CD8-positive, alpha-beta T cell (primary cell): ENCODE measurements at regions of chr19 and their contacts with region 1.

Region 1: GRCh38 chr19:48637170-48637947 is at the start of gene DBP:
- DNase-seq: peak; percentile 99 to 100 (median 100)
- ATAC-seq: peak; percentile 70
- H3K4me3 ChIP-seq: peak within 1 kb of the TSS; percentile 76 to 97
- H3K4me3 Mint-ChIP-seq: peak within 1 kb of the TSS; percentile 98
- H3K27ac ChIP-seq: peak within 1 kb of the TSS; percentile 93 to 95
- H3K27ac Mint-ChIP-seq: peak within 1 kb of the TSS; percentile 98
- H3K4me1 ChIP-seq: peaks cover 43% of the 10 kb centered on the region
- H3K4me1 Mint-ChIP-seq: peaks cover 43% of the 10 kb centered on the region
- H3K27me3 ChIP-seq: no peaks in the 10 kb centered on the region
- H3K27me3 Mint-ChIP-seq: no peaks in the 10 kb centered on the region
- CTCF ChIP-seq: no peak
- total RNA-seq, gene DBP: 24.8 to 25.6 TPM

Region 2: DNA sequence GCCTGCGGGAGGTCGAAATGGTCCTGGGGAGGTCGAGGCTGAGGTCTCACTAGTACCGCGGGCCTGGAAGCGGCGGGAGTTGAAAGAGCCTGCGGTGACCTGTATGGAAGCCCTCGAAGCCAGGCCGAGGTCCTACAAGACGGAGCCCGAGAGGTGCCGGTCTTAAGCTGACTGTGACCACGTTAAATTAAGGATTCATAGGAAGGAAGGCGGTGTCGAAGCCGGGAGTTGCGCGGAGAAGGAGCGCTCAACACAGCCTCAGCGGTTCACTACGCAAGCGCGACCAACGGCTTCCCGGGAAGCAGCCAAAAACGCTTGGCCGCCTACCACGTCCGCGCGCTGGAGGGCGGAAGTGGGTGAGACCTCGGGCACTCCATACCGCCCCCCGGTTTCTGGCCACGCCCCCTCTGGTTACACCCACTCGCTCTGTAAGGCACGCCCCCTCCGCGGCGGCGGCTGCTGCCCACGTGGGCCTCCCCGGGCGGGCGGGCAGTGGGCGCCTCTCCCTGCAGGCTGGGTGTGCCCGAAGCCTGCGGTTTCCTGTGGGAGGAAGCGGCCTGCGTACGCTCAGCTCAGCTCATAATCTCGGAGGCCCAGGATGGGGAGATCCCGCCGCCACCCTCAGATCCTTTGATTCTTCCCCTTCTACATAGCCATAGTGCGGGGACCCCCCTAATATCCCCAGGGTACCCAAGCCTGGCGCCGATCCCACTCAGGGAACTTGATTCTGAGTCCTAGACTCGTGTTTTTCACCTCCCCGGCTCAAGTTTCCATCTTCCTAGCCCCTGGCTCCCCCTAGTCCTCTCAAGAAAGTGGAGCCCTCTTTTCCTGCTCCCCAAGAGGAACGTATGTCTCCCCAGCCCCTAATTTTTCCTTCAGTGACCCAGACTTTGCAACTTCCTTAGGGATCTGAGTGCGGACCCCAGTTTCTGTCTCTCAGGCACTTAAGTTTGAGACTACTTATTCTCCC is 315.5 kb before region 1 on chr19:
- CTCF ChIA-PET with region 1: no interaction called
- POLR2A ChIA-PET with region 1: no interaction called
- intact Hi-C with region 1: loop called in 1 of 2 experiments (anchors 2 kb)
- DNase-seq: peak; percentile 99 to 100 (median 100)
- ATAC-seq: peak; percentile 68
- H3K4me3 ChIP-seq: peak overlapping the region; percentile 76 to 78
- H3K4me3 Mint-ChIP-seq: peak overlapping the region; percentile 94
- H3K27ac ChIP-seq: peak overlapping the region; percentile 87 to 99
- H3K27ac Mint-ChIP-seq: peak overlapping the region; percentile 100
- H3K4me1 ChIP-seq: peaks cover 54% of the 10 kb centered on the region
- H3K4me1 Mint-ChIP-seq: peaks cover 60% of the 10 kb centered on the region
- H3K27me3 ChIP-seq: no peaks in the 10 kb centered on the region
- H3K27me3 Mint-ChIP-seq: no peaks in the 10 kb centered on the region
- CTCF ChIP-seq: no peak

Region 3: DNA sequence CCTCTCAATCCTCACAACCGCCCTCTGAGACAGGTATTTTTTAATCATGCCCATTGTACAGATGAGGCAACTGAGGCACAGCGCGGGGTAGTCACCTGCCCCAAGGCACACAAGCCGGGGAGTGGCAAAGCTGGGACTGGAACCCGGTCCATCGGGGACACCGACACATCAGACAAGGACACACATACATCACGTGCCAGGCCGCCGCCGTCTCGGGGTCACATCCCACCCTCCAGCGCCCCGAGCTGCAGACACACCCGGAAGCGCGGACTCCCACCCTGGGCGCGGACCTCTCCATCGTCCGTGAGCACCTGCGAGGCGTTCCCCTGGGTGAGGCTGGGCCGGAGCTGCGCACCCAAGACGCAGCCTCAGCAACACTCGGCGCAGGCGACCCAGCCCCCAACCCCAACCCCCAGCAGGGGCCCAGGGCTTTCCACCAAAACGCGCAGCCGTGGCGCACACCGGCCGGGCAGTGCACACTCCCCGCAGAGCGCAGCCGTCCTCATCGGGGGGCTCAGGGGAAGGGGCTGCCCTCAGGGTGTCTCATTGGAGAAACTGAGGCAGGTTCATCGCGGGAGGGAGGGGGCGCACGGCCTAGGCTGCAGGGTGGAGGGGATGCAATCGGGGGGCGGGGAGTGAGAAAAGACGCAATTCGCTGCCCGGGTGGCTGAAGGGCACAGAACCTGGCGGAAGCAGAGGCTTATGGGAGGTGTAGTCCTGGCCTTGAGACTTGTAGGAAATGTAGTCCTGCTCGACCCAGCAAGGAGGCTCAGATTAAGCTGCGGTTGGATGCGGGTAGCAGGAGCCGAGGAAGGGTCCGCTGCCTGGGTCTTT is 123.9 kb before region 1 on chr19:
- CTCF ChIA-PET with region 1: interaction called, 3 read pairs
- POLR2A ChIA-PET with region 1: no interaction called
- intact Hi-C with region 1: loop called in 1 of 2 experiments (anchors 1 kb)
- DNase-seq: peak in 8 of 9 experiments; percentile 61 to 88 (median 78)
- ATAC-seq: peak; percentile 58
- H3K4me3 ChIP-seq: peak overlapping the region; percentile 78 to 88
- H3K4me3 Mint-ChIP-seq: no peak overlapping the region
- H3K27ac ChIP-seq: peak overlapping the region; percentile 68 to 71
- H3K27ac Mint-ChIP-seq: peak overlapping the region; percentile 93
- H3K4me1 ChIP-seq: peaks cover 23% of the 10 kb centered on the region
- H3K4me1 Mint-ChIP-seq: peaks cover 18% of the 10 kb centered on the region
- H3K27me3 ChIP-seq: no peaks in the 10 kb centered on the region
- H3K27me3 Mint-ChIP-seq: no peaks in the 10 kb centered on the region
- CTCF ChIP-seq: no peak

Region 4: GRCh38 chr19:48713864-48714758 is 76.8 kb after region 1 on chr19:
- CTCF ChIA-PET with region 1: no interaction called
- POLR2A ChIA-PET with region 1: no interaction called
- intact Hi-C with region 1: loop called in 1 of 2 experiments (anchors 1 kb)
- DNase-seq: peak; percentile 94 to 99 (median 96)
- ATAC-seq: peak; percentile 95
- H3K4me3 ChIP-seq: peak overlapping the region; percentile 76 to 83
- H3K4me3 Mint-ChIP-seq: peak overlapping the region; percentile 85
- H3K27ac ChIP-seq: peak overlapping the region; percentile 45 to 70
- H3K27ac Mint-ChIP-seq: peak overlapping the region; percentile 73
- H3K4me1 ChIP-seq: peaks cover 20% of the 10 kb centered on the region
- H3K4me1 Mint-ChIP-seq: peaks cover 18% of the 10 kb centered on the region
- H3K27me3 ChIP-seq: no peaks in the 10 kb centered on the region
- H3K27me3 Mint-ChIP-seq: no peaks in the 10 kb centered on the region
- CTCF ChIP-seq: no peak

Region 5: DNA sequence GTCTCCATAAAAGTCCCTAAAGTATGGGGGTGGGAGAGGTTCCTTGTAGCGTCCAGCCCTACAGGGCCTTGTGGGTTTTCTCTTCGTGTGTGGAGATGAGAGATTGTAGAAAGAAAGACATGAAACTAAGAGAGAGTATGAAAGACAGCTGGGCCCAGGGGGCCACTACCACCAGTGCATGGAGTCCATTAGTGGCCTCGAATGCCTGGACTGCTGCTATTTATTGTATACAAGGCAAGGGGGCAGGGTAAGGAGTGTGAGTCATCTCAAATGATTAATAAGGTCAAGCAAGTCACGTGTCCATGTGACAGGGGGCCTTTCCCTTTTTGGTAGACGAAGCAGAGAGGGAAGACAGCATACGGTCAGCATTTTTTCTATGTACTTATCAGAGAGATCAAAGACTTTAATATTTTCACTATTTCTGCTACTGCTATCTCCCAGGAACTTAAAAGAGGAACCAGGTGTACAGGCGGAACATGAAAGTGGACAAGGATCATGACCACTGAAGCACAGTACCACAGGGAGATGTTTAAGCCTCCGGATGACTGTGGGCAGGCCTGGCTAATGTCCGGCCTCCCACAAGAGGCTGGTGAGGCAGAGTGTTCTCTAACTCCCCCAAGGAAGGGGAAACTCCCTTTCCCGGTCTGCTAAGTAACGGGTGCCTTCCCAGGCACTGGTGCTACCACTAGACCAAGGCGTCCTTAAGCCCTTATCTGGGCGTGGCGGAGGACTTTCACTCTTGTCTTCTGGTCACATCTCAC is 143.5 kb after region 1 on chr19:
- CTCF ChIA-PET with region 1: no interaction called
- POLR2A ChIA-PET with region 1: no interaction called
- intact Hi-C with region 1: no loop called
- DNase-seq: no peak
- ATAC-seq: no peak
- H3K4me3 ChIP-seq: no peak overlapping the region
- H3K4me3 Mint-ChIP-seq: no peak overlapping the region
- H3K27ac ChIP-seq: no peak overlapping the region
- H3K27ac Mint-ChIP-seq: no peak overlapping the region
- H3K4me1 ChIP-seq: peaks cover 3% of the 10 kb centered on the region
- H3K4me1 Mint-ChIP-seq: peaks cover 6% of the 10 kb centered on the region
- H3K27me3 ChIP-seq: no peaks in the 10 kb centered on the region
- H3K27me3 Mint-ChIP-seq: peaks cover 11% of the 10 kb centered on the region
- CTCF ChIP-seq: no peak

Region 6: DNA sequence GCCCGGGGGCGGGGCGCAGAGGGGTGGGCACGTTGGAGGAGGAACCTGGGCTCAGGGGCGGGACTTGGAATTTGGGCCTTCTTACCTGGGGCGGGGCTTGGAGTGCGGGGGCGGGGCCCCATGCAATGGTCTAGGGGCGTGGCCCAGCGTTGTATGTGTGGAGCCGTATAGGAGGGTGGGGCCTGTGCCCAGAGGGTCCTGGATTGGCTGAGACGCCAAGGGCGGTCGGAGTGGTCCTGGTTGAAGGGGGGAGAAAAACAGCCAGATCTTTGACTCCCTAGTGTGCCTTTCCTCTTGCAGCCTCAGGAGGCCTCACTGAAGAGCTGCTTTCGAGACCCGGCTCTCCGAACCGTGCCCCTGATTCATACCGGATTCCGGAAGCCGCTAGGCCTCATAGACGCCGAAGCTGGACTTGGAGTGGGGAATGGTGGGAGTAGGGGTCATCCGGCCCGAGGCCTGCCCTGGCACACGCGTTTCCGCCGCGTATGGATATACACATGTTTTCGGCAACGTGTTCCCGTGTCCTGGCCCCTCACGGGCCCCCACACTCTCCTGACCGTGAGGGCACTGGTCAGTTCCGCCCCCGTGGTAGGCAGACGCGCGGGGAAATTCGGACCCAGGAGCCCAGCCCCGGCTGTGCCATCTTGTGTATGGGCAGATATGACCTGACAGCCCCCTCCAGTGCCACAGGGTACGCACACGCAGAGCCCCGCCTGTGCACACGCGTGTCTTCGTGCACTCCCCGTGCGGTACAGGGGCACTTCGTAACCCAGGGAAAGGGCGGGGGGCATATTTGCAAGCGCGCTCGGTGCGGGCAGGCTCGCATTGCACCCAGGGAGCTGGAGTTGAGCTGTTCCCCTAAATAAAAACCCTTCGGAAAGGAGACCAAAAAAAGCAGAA is 953.0 kb after region 1 on chr19:
- CTCF ChIA-PET with region 1: no interaction called
- POLR2A ChIA-PET with region 1: no interaction called
- intact Hi-C with region 1: loop called (anchors 5 kb)
- DNase-seq: peak; percentile 90 to 98 (median 94)
- ATAC-seq: peak; percentile 77
- H3K4me3 ChIP-seq: peak overlapping the region; percentile 78 to 97
- H3K4me3 Mint-ChIP-seq: peak overlapping the region; percentile 91
- H3K27ac ChIP-seq: peak overlapping the region; percentile 82 to 83
- H3K27ac Mint-ChIP-seq: peak overlapping the region; percentile 91
- H3K4me1 ChIP-seq: peaks cover 23% of the 10 kb centered on the region
- H3K4me1 Mint-ChIP-seq: peaks cover 36% of the 10 kb centered on the region
- H3K27me3 ChIP-seq: no peaks in the 10 kb centered on the region
- H3K27me3 Mint-ChIP-seq: no peaks in the 10 kb centered on the region
- CTCF ChIP-seq: peak; percentile 29